PC-9 (cell line): ENCODE measurements at regions of chr6 and their contacts with region 1.

Region 1: GRCh38 chr6:99868074-99868702 is 125.8 kb downstream of the MCHR2 start:
- DNase-seq: peak; percentile 39 to 71
- H3K4me3 ChIP-seq: no peak overlapping the region
- H3K27ac ChIP-seq: no peak overlapping the region
- H3K4me1 ChIP-seq: no peaks in the 10 kb centered on the region
- H3K27me3 ChIP-seq: 0 out of 2 replicates have a peak, but pooled peaks cover 9% of the 10 kb centered on the region
- CTCF ChIP-seq: peak; percentile 90

Region 2: GRCh38 chr6:99711302-99711701 is 156.9 kb before region 1 on chr6:
- CTCF ChIA-PET with region 1: no interaction called
- POLR2A ChIA-PET with region 1: no interaction called
- intact Hi-C with region 1: no loop called
- DNase-seq: no peak
- H3K4me3 ChIP-seq: no peak overlapping the region
- H3K27ac ChIP-seq: no peak overlapping the region
- H3K4me1 ChIP-seq: no peaks in the 10 kb centered on the region
- H3K27me3 ChIP-seq: no peaks in the 10 kb centered on the region
- CTCF ChIP-seq: no peak

Region 3: DNA sequence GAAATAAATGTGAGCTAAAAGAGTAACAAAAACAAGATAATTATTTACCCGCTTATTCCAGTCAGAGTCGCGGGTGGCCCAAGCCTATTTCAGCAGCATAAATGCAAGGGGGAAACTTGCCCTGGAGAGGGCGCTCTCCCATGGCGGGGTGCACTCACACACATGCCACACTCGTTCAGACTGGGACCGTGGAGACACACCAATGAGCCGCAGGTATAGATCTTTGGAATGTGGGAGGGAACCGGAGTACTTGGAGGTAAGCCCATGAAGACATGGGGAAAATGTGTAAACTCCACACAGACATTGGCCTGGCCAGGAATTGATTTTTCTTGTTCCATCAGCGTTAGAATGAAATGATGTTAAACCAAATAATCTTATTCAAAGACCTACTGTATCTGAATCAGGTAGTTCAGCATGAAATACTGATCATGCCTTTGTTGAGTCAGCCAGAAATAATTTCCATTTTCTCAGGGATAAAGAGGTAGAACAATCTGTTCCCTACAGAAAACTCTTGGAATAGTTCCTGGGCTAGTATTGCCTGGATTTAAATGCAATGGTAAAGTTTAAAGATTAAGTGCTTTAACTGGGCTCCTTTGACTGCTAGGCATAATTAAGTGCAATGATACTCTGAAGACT is 65.7 kb before region 1 on chr6:
- CTCF ChIA-PET with region 1: no interaction called
- POLR2A ChIA-PET with region 1: no interaction called
- intact Hi-C with region 1: no loop called
- DNase-seq: no peak
- H3K4me3 ChIP-seq: no peak overlapping the region
- H3K27ac ChIP-seq: no peak overlapping the region
- H3K4me1 ChIP-seq: no peaks in the 10 kb centered on the region
- H3K27me3 ChIP-seq: no peaks in the 10 kb centered on the region
- CTCF ChIP-seq: 0 out of 2 replicates have a peak, but pooled peaks have one; percentile 20

Region 4: DNA sequence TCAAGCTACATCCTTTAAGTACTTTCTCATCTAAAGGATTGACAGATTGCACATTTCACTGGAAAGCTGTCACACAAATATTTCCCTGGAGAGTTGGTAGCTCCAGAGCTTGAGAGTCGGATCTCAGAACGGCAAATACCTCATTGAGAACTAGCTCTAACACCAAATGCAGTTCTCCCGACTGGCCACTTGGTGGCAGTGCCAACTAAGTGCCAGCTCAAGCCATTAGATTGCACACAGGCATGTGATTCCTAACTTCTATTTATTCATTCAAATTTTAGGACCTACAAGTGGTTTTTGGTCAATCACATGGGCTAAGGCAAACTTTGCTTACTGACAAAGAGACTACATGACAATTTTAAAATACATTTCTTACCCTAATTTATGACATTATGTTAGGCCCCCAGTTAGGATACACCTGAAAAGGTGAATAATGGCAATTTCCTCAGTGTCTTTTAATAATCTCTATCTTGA is 133.8 kb after region 1 on chr6:
- CTCF ChIA-PET with region 1: interaction called, 4 read pairs
- POLR2A ChIA-PET with region 1: no interaction called
- intact Hi-C with region 1: loop called (anchors 5 kb)
- DNase-seq: peak; percentile 40 to 43
- H3K4me3 ChIP-seq: no peak overlapping the region
- H3K27ac ChIP-seq: no peak overlapping the region
- H3K4me1 ChIP-seq: no peaks in the 10 kb centered on the region
- H3K27me3 ChIP-seq: no peaks in the 10 kb centered on the region
- CTCF ChIP-seq: peak; percentile 97

Region 5: GRCh38 chr6:100099189-100100074 is 231.2 kb after region 1 on chr6:
- CTCF ChIA-PET with region 1: interaction called, 4 read pairs
- POLR2A ChIA-PET with region 1: no interaction called
- intact Hi-C with region 1: loop called (anchors 1 kb)
- DNase-seq: no peak
- H3K4me3 ChIP-seq: no peak overlapping the region
- H3K27ac ChIP-seq: no peak overlapping the region
- H3K4me1 ChIP-seq: no peaks in the 10 kb centered on the region
- H3K27me3 ChIP-seq: no peaks in the 10 kb centered on the region
- CTCF ChIP-seq: peak; percentile 80

Region 6: GRCh38 chr6:100105138-100105753 is 237.1 kb after region 1 on chr6:
- CTCF ChIA-PET with region 1: interaction called, 10 read pairs
- POLR2A ChIA-PET with region 1: no interaction called
- intact Hi-C with region 1: no loop called
- DNase-seq: no peak
- H3K4me3 ChIP-seq: no peak overlapping the region
- H3K27ac ChIP-seq: no peak overlapping the region
- H3K4me1 ChIP-seq: no peaks in the 10 kb centered on the region
- H3K27me3 ChIP-seq: no peaks in the 10 kb centered on the region
- CTCF ChIP-seq: no peak

Region 7: DNA sequence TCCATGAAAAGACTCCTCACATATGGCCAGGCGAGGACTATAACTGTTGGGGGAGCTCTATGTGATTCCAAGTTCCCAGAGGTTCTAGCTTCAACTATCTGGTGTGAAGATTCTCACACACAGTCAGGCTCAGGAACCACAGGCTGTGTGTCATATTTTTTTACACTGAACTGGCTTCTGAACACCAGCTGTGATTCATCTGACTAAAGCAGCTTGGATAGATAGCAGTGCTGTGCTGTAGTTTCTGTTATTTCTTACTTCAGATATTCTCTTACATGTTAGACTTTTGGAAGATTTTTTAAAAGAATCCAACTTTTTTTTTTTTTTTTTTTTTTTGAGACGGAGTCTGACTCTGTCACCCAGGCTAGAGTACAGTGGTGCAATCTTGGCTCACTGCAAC is 266.5 kb after region 1 on chr6:
- CTCF ChIA-PET with region 1: no interaction called
- POLR2A ChIA-PET with region 1: interaction called, 16 read pairs
- intact Hi-C with region 1: no loop called
- DNase-seq: no peak
- H3K4me3 ChIP-seq: no peak overlapping the region
- H3K27ac ChIP-seq: no peak overlapping the region
- H3K4me1 ChIP-seq: no peaks in the 10 kb centered on the region
- H3K27me3 ChIP-seq: no peaks in the 10 kb centered on the region
- CTCF ChIP-seq: no peak

Region 8: DNA sequence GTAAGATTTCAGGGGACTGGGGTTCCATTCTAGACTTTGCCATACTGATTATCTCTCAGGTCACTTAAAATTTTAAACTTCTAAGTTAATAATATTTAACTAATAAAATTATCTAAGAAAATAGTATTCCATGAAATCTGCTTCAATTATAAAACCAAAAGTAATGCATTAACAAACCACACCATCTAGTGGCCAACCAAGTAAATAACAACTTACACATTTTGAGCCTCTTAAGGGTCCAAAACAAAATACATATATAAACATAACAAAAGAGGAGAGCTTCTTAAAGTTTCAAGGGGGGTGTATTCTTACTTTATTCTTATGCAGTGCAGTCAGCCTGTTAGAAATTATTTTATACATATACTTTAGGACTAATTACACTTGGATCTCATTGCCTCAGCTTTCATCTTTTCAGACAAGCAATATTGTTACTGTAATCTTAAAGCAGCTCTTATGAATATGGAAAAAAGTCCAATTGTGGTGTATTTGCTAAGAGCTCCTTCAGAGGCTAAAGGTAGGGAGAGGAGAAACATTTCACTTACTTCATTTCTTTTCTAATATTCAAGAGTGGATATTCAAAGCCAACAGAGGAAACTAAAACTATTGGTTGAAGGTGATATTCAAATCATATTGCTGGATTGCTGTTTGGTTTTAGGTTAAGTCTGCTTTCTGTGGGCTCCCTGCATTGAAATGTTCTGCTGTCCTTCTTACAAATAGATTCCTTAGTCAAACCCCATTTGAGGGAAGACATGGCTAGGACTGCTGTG is 796.3 kb after region 1 on chr6:
- CTCF ChIA-PET with region 1: no interaction called
- POLR2A ChIA-PET with region 1: no interaction called
- intact Hi-C with region 1: loop called (anchors 1 kb)
- DNase-seq: no peak
- H3K4me3 ChIP-seq: no peak overlapping the region
- H3K27ac ChIP-seq: peak overlapping the region; percentile 69; the same call in 1 of the 2 replicates
- H3K4me1 ChIP-seq: peaks cover 14% of the 10 kb centered on the region
- H3K27me3 ChIP-seq: no peaks in the 10 kb centered on the region
- CTCF ChIP-seq: peak; percentile 82